GM12878 (cell line): ENCODE measurements at regions of chrX and their contacts with region 1.

Region 1: DNA sequence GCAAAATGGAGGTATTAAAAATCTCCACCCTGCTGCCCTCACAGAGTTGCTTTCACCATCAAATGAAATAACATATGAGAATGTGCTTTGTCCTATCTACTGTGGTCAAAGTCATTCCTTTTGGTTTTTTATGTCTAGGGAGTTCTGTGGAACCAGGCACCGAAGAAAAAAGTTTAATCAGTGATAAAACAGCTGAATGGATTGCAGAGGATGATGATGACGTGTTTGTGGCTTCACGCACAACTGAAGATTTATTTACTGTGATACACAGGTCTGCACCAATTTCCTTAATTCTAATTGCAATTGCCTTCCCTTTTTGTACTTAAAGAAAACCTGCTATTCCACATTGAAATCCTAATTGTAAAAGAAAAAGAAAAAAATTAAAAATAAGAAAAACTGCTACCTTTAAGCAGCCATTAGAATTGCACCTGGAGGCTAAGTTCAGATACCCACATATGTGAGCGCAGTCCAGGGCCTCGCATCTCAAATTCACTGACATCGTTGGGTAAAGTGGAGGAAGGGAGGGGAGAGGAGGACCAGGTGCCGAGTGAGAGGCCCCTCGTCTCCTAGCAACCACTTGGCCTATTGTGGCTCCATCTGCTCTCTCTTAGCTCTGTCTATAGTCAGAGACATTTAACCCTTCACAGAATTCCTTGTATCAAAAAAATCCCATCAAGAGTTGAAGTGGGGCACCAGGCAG is 10.5 kb upstream of the RTL5 start:
- DNase-seq: no peak
- ATAC-seq: no peak
- H3K4me3 ChIP-seq: no peak overlapping the region
- H3K27ac ChIP-seq: no peak overlapping the region
- H3K4me1 ChIP-seq: peaks cover 14% of the 10 kb centered on the region
- H3K27me3 ChIP-seq: 0 out of 4 replicates have a peak, but pooled peaks cover 0 to 2% of the 10 kb centered on the region in 2 experiments
- CTCF ChIP-seq: no peak
- EP300 ChIP-seq: no peak
- POLR2A ChIP-seq: no peak
- RAD21 ChIP-seq: no peak

Region 2: DNA sequence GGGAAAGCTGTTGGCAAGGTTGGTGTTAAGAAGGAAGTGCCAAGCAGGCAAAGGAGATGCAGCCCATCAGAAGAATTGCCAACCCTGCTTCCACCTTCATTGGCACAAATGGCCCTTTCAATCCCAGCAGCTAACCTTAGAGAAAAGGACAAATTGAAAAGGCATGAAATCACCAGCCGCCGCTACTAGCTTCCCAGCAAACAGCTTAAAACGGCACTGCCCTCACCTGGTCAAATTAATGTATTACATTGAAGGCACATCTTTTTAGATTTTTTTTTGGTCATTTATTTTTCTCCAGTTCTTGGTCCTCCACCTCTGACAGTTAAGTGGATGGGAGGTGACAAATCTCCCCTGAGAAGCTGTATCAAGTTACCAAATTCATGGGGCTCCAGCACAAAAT is 282.6 kb before region 1 on chrX:
- CTCF ChIA-PET with region 1: no interaction called
- POLR2A ChIA-PET with region 1: no interaction called
- RAD21 ChIA-PET with region 1: no interaction called
- SMC1A ChIA-PET with region 1: no interaction called
- in situ Hi-C with region 1: no loop called
- intact Hi-C with region 1: no loop called
- DNase-seq: no peak
- ATAC-seq: peak; percentile 55
- H3K4me3 ChIP-seq: no peak overlapping the region
- H3K27ac ChIP-seq: no peak overlapping the region
- H3K4me1 ChIP-seq: no peaks in the 10 kb centered on the region
- H3K27me3 ChIP-seq: no peaks in the 10 kb centered on the region
- CTCF ChIP-seq: peak; percentile 56 to 65 (median 59)
- EP300 ChIP-seq: no peak
- POLR2A ChIP-seq: no peak
- RAD21 ChIP-seq: peak; percentile 72

Region 3: GRCh38 chrX:71910986-71911730 is 231.1 kb before region 1 on chrX:
- CTCF ChIA-PET with region 1: no interaction called
- POLR2A ChIA-PET with region 1: no interaction called
- RAD21 ChIA-PET with region 1: no interaction called
- SMC1A ChIA-PET with region 1: no interaction called
- in situ Hi-C with region 1: no loop called
- intact Hi-C with region 1: no loop called
- DNase-seq: no peak
- ATAC-seq: peak; percentile 31; the same call in 1 of the 3 replicates
- H3K4me3 ChIP-seq: no peak overlapping the region
- H3K27ac ChIP-seq: no peak overlapping the region
- H3K4me1 ChIP-seq: no peaks in the 10 kb centered on the region
- H3K27me3 ChIP-seq: peaks cover 0 to 2% of the 10 kb centered on the region in 2 experiments; a peak in 2 of 4 replicates
- CTCF ChIP-seq: no peak
- EP300 ChIP-seq: no peak
- POLR2A ChIP-seq: no peak
- RAD21 ChIP-seq: no peak

Region 4: GRCh38 chrX:72181178-72182125 is 39.2 kb after region 1 on chrX and contains the start of gene PIN4:
- CTCF ChIA-PET with region 1: no interaction called
- POLR2A ChIA-PET with region 1: no interaction called
- RAD21 ChIA-PET with region 1: no interaction called
- SMC1A ChIA-PET with region 1: no interaction called
- in situ Hi-C with region 1: no loop called
- intact Hi-C with region 1: loop called (anchors 2 kb)
- DNase-seq: peak; percentile 88
- ATAC-seq: peak; percentile 97
- H3K4me3 ChIP-seq: peak within 1 kb of the TSS; percentile 84
- H3K27ac ChIP-seq: peak within 1 kb of the TSS; percentile 83
- H3K4me1 ChIP-seq: peaks cover 3% of the 10 kb centered on the region; the same call in 1 of the 2 replicates
- H3K27me3 ChIP-seq: no peaks in the 10 kb centered on the region
- CTCF ChIP-seq: no peak
- EP300 ChIP-seq: no peak
- POLR2A ChIP-seq: peak; percentile 64
- RAD21 ChIP-seq: no peak
- polyA plus RNA-seq, gene PIN4: 46.5 to 53.6 TPM

Region 5: DNA sequence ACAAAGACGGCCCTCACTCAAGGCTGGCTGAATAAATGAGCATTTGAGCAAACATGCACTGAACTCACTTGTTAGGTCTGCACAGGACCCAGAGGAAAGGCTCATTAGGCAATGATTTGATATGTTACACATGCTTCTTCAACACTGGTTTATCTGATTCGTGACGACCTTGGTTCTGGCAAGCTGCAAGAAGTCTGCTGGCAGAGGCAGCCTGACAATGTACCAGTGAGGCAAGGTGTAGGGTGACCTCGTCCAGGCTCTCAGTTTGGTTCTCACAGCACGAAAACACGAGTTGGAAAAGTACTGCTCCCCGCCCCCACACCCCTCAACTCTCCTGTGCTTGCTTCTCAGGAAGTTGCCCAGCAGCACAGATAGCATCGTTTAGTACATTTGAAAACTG is 226.6 kb after region 1 on chrX:
- CTCF ChIA-PET with region 1: no interaction called
- POLR2A ChIA-PET with region 1: no interaction called
- RAD21 ChIA-PET with region 1: no interaction called
- SMC1A ChIA-PET with region 1: no interaction called
- in situ Hi-C with region 1: no loop called
- intact Hi-C with region 1: no loop called
- DNase-seq: no peak
- ATAC-seq: no peak
- H3K4me3 ChIP-seq: no peak overlapping the region
- H3K27ac ChIP-seq: no peak overlapping the region
- H3K4me1 ChIP-seq: no peaks in the 10 kb centered on the region
- H3K27me3 ChIP-seq: no peaks in the 10 kb centered on the region
- CTCF ChIP-seq: no peak
- EP300 ChIP-seq: no peak
- POLR2A ChIP-seq: no peak
- RAD21 ChIP-seq: no peak